ENCODE measurements at regions of chr6 and their contacts with region 1.

Region 1: DNA sequence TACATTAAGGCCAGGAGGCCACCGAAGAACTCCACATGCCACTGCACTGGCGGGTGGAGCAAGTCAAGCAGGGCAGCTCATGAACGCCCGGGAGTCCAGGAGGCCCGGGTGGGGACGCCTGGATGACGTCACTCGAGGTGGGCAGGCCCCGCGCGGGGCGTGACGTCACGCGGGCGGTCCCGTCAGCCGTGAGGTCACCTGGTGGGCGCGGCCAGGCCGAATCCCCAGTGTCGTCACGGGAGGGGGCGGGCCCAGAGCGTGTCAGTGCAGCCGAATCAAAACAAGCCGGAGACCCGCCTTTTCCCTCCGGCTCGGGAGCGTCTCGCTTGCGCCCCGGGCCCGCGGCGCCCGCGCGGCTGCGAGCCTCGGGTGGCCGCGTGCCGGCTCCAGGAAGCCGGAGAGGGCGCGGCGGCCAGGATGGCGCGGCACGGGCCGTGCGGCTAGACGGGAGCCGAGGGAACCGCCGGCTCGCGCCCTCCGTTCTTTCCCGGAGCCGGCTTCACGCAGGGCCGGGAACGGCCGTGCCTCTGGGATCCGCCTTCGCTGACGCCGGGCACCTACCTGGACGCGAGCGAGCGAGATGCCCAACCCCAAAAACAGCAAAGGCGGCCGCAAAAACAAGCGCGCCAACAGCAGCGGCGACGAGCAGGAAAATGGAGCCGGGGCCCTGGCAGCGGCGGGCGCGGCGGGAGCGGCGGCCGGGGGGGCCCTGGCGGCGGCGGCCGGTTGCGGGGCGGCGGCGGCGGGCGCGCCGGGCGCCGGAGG is at the start of gene HECA:
- DNase-seq: peak; percentile 99
- ATAC-seq: peak; percentile 73
- H3K4me3 Mint-ChIP-seq: peak within 1 kb of the TSS; percentile 95
- H3K27ac Mint-ChIP-seq: peak within 1 kb of the TSS; percentile 98
- H3K4me1 Mint-ChIP-seq: peaks cover 79% of the 10 kb centered on the region
- H3K27me3 Mint-ChIP-seq: no peaks in the 10 kb centered on the region
- CTCF ChIP-seq: no peak
- total RNA-seq, gene HECA: 34.9 and 38.3 TPM in 2 replicates

Region 2: GRCh38 chr6:138588805-138589434 is 546.1 kb before region 1 on chr6:
- CTCF ChIA-PET with region 1: no interaction called
- POLR2A ChIA-PET with region 1: no interaction called
- intact Hi-C with region 1: loop called (anchors 10 kb)
- DNase-seq: no peak
- ATAC-seq: peak; percentile 48
- H3K4me3 Mint-ChIP-seq: no peak overlapping the region
- H3K27ac Mint-ChIP-seq: no peak overlapping the region
- H3K4me1 Mint-ChIP-seq: peaks cover 27% of the 10 kb centered on the region
- H3K27me3 Mint-ChIP-seq: no peaks in the 10 kb centered on the region
- CTCF ChIP-seq: peak; percentile 71

Region 3: DNA sequence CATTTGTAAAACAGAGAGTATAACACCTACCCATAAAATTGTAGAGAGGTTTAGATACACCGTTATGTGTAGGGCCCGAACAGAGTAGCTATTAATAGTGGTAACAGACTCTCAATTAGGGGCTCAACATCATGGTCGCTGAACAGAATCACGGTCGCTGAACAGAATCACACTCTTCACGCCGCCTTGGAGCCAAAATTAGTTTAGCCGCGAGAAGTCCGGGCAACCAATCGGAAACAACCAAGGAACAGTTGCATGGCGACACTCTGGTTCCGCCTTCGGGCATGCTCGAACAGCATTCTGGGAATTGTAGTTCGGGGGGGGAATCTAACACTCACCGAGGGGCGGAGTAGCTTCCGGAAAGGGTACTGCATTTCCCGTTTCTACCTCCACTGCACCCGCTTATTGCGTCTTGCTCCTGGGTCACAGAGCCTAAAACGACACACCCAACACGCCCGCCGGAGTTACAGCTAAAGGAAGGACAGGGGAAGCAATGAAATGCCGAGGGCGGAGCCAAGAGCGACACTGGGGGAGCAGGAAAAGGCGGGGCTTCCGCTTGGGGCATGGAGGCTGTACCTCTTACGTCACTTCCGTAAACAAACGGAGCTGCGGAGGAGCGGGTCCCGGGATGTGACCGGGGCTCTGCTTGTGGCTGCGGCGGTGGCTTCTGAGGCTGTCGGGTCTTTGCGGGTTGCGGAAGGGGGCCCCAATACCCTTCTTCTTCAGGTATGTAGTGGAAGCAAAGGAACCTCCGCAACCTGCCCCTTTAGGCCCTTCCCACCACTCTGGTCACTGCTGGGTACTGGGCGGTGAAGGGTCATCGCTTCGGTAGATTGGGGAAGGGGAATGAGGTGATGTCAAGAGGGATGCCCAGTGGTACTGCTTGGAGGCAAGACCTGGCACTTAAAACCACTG is 361.6 kb before region 1 on chr6 and contains the start of gene CCDC28A:
- CTCF ChIA-PET with region 1: no interaction called
- POLR2A ChIA-PET with region 1: no interaction called
- intact Hi-C with region 1: loop called (anchors 1 kb)
- DNase-seq: peak; percentile 90
- ATAC-seq: peak; percentile 85
- H3K4me3 Mint-ChIP-seq: peak within 1 kb of the TSS; percentile 100
- H3K27ac Mint-ChIP-seq: peak within 1 kb of the TSS; percentile 100
- H3K4me1 Mint-ChIP-seq: peaks cover 28% of the 10 kb centered on the region
- H3K27me3 Mint-ChIP-seq: no peaks in the 10 kb centered on the region
- CTCF ChIP-seq: no peak
- total RNA-seq, gene CCDC28A: 14.0 and 14.6 TPM in 2 replicates

Region 4: DNA sequence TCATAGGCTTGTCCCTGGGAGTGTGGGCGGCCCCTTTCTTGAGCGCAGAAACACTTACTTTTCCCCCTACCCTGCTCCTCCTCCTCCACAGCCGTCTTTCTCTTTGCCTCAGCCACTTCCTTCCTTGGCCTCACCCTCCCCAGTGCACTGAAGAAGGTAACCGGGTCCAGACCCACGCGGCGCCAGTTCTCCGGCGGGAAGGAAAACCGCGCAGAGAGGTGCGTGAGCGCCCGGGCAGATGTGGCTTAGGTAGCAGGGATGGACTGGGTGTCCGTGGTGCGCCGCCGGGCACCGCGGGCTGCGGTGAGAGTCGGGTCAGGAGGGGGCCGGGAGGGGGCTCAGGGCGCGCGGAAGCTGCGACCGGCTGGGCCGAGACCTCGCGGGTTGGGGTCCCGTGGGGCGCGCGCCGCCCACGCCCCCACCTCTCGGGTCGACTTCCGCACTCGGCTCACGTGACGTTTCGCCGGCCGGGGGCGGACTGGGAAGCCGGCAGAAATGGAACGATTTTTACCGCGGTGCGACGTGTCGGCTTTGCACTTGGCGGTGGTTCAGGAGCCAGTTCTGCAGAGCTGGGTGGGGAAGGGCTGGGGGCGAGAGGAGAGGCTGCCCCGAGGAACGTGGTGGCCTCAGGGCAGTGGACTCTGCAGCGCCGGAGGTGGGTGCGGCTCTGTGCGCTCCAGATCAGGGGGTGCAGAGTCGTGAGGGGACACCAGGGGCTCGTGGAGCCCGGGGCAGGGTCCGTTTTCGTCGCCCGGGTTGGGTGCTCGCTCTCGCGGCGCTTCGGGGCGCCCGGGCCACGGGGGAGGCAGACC is 106.1 kb before region 1 on chr6 and contains the start of gene ABRACL:
- CTCF ChIA-PET with region 1: no interaction called
- POLR2A ChIA-PET with region 1: interaction called, 5 read pairs
- intact Hi-C with region 1: loop called (anchors 1 kb)
- DNase-seq: peak; percentile 83
- ATAC-seq: peak; percentile 71
- H3K4me3 Mint-ChIP-seq: no peak within 1 kb of the TSS
- H3K27ac Mint-ChIP-seq: peak within 1 kb of the TSS; percentile 95
- H3K4me1 Mint-ChIP-seq: peaks cover 14% of the 10 kb centered on the region
- H3K27me3 Mint-ChIP-seq: no peaks in the 10 kb centered on the region
- CTCF ChIP-seq: no peak
- total RNA-seq, gene ABRACL: 63.5 and 63.8 TPM in 2 replicates

Region 5: GRCh38 chr6:139146317-139146726 is 11.3 kb after region 1 on chr6:
- CTCF ChIA-PET with region 1: interaction called, 4 read pairs
- POLR2A ChIA-PET with region 1: interaction called, 5 read pairs
- intact Hi-C with region 1: loop called (anchors 2 kb)
- DNase-seq: no peak
- ATAC-seq: peak; percentile 28
- H3K4me3 Mint-ChIP-seq: no peak overlapping the region
- H3K27ac Mint-ChIP-seq: no peak overlapping the region
- H3K4me1 Mint-ChIP-seq: peaks cover 87% of the 10 kb centered on the region
- H3K27me3 Mint-ChIP-seq: no peaks in the 10 kb centered on the region
- CTCF ChIP-seq: no peak

Region 6: GRCh38 chr6:139271056-139271455 is 136.1 kb after region 1 on chr6:
- CTCF ChIA-PET with region 1: no interaction called
- POLR2A ChIA-PET with region 1: interaction called, 4 read pairs
- intact Hi-C with region 1: loop called (anchors 2 kb)
- DNase-seq: no peak
- ATAC-seq: peak; percentile 94
- H3K4me3 Mint-ChIP-seq: peak overlapping the region; percentile 75
- H3K27ac Mint-ChIP-seq: peak overlapping the region; percentile 96
- H3K4me1 Mint-ChIP-seq: peaks cover 80% of the 10 kb centered on the region
- H3K27me3 Mint-ChIP-seq: no peaks in the 10 kb centered on the region
- CTCF ChIP-seq: no peak